Activated CD4-positive, alpha-beta memory T cell treated with anti-CD3 and anti-CD28 coated beads for 36 hours (primary cell): ENCODE measurements at regions of chr19 and their contacts with region 1.

Region 1: GRCh38 chr19:29610563-29611271 is 4.6 kb downstream of the POP4 start:
- DNase-seq: peak; percentile 89
- H3K4me3 Mint-ChIP-seq: no peak overlapping the region
- H3K27ac Mint-ChIP-seq: peak overlapping the region; percentile 64
- H3K4me1 Mint-ChIP-seq: peaks cover 17% of the 10 kb centered on the region
- H3K27me3 Mint-ChIP-seq: no peaks in the 10 kb centered on the region

Region 2: GRCh38 chr19:28940751-28941500 is 669.8 kb before region 1 on chr19:
- CTCF ChIA-PET with region 1: no interaction called
- POLR2A ChIA-PET with region 1: no interaction called
- intact Hi-C with region 1: no loop called
- DNase-seq: no peak
- H3K4me3 Mint-ChIP-seq: no peak overlapping the region
- H3K27ac Mint-ChIP-seq: no peak overlapping the region
- H3K4me1 Mint-ChIP-seq: no peaks in the 10 kb centered on the region
- H3K27me3 Mint-ChIP-seq: no peaks in the 10 kb centered on the region

Region 3: GRCh38 chr19:29477831-29478577 is 132.7 kb before region 1 on chr19:
- CTCF ChIA-PET with region 1: no interaction called
- POLR2A ChIA-PET with region 1: no interaction called
- intact Hi-C with region 1: no loop called
- DNase-seq: no peak
- H3K4me3 Mint-ChIP-seq: no peak overlapping the region
- H3K27ac Mint-ChIP-seq: no peak overlapping the region
- H3K4me1 Mint-ChIP-seq: no peaks in the 10 kb centered on the region
- H3K27me3 Mint-ChIP-seq: peaks cover 22% of the 10 kb centered on the region

Region 4: DNA sequence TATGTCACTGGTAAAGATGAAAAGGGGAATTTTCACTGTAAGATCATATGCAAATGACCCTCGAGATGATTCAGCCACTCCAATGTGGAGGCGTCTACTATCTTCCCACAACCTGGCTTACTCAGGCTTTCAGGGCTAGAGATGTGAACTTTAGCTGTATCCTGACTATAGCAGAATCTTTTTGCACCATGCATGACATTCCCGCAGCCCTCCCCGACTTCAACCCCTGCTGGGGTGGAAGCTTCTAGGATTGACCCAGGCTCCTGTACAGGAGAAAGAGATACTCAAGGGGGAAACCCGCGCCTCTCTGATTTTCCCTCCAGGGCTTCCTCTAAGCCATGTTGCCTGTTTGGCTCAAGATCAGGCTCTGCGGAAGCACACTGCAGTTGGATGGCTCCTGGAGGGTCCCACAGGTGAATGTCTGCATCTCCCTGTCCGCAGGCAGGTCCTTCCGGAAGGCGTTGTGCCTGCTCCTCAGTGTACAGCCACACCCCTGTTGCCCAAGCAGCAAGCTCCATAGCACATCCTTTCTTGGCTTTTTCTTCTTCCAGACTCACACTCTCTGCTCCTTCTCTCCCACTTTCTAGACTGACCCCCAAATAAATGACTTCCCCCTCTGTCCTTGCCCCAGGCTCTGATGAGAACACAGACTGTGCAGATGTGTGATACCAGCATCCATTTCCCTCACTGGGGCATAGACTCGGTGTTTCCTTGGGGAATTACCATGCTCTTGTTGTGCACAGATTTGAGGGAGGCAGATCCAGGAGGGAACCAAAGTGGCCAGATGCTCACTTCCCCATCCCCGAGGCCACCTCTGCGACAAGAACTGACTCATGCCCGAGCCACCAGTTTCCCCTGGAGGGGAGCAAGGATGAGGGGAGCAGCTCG is 33.7 kb before region 1 on chr19:
- CTCF ChIA-PET with region 1: interaction called, 4 read pairs
- POLR2A ChIA-PET with region 1: interaction called, 20 read pairs
- intact Hi-C with region 1: loop called (anchors 1 kb)
- DNase-seq: peak; percentile 73
- H3K4me3 Mint-ChIP-seq: no peak overlapping the region
- H3K27ac Mint-ChIP-seq: no peak overlapping the region
- H3K4me1 Mint-ChIP-seq: peaks cover 23% of the 10 kb centered on the region
- H3K27me3 Mint-ChIP-seq: peaks cover 63% of the 10 kb centered on the region

Region 5: GRCh38 chr19:29622138-29623070 is 11.7 kb after region 1 on chr19:
- CTCF ChIA-PET with region 1: interaction called, 62 read pairs
- POLR2A ChIA-PET with region 1: interaction called, 16 read pairs
- intact Hi-C with region 1: no loop called
- DNase-seq: peak; percentile 32
- H3K4me3 Mint-ChIP-seq: no peak overlapping the region
- H3K27ac Mint-ChIP-seq: no peak overlapping the region
- H3K4me1 Mint-ChIP-seq: peaks cover 43% of the 10 kb centered on the region
- H3K27me3 Mint-ChIP-seq: no peaks in the 10 kb centered on the region

Region 6: GRCh38 chr19:29680447-29680846 is 69.7 kb after region 1 on chr19:
- CTCF ChIA-PET with region 1: interaction called, 11 read pairs
- POLR2A ChIA-PET with region 1: interaction called, 7 read pairs
- intact Hi-C with region 1: no loop called
- DNase-seq: peak; percentile 94
- H3K4me3 Mint-ChIP-seq: peak overlapping the region; percentile 63
- H3K27ac Mint-ChIP-seq: peak overlapping the region; percentile 89
- H3K4me1 Mint-ChIP-seq: peaks cover 58% of the 10 kb centered on the region
- H3K27me3 Mint-ChIP-seq: no peaks in the 10 kb centered on the region

Region 7: DNA sequence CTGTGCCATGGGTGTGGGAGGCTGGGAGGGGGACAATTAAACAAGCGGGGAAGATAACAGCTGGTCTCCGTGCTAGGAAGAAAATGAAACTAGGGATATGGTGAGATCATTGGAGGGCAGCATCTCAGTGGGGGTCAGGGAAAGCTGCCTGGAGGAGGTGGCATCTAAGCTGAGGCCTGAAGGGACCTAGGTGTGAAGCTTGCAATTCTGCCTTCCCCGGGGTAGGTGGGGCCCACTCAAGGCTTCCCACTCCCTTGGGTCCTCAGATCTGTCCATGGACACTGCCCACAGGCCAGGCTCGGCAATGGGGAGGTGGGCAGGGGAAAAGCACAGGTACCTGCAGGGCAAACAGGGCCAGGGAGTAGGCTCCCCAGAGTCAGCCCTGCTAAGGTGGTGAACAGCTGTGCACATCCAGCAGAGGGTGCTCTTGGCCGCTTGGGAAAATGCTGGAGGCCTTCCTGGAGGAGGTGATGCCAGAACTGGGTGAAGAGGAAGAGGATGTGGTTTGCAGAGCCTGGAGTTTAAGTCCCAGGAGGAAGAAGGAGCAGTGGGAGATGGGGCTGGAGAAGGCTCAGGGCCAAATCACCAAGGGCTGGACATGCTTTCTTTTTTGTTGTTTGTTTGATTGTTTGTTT is 175.4 kb after region 1 on chr19:
- CTCF ChIA-PET with region 1: no interaction called
- POLR2A ChIA-PET with region 1: no interaction called
- intact Hi-C with region 1: no loop called
- DNase-seq: peak; percentile 42
- H3K4me3 Mint-ChIP-seq: no peak overlapping the region
- H3K27ac Mint-ChIP-seq: no peak overlapping the region
- H3K4me1 Mint-ChIP-seq: no peaks in the 10 kb centered on the region
- H3K27me3 Mint-ChIP-seq: no peaks in the 10 kb centered on the region

Region 8: DNA sequence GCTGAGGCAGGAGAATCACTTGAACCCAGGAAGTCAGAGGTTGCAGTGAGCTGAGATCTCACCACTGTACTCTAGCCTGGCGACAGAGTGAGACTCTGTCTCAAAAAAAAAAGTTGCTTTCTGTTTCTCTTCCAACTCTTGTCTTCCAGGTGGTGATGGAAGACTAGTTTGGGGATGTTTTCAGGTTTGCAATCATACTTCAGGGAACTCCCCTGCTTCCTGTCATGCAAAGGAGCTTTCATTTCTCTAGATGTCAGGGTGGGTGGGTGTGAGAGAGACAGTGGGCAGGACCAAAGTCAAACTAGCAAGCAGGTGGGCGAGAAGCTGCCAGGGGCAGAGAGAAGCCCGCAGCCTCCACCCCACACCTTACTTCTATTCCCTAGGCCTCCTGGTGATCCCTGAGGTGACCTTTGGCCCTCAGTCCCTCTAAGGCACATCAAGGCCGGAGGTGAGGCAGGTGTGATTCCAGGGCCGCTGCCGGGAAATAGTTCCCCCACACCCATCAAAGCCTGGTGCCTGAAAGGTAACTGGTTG is 226.8 kb after region 1 on chr19:
- CTCF ChIA-PET with region 1: no interaction called
- POLR2A ChIA-PET with region 1: no interaction called
- intact Hi-C with region 1: loop called (anchors 2 kb)
- DNase-seq: peak; percentile 75
- H3K4me3 Mint-ChIP-seq: peak overlapping the region; percentile 55
- H3K27ac Mint-ChIP-seq: peak overlapping the region; percentile 93
- H3K4me1 Mint-ChIP-seq: peaks cover 46% of the 10 kb centered on the region
- H3K27me3 Mint-ChIP-seq: no peaks in the 10 kb centered on the region